MCF 10A (cell line): ENCODE measurements at regions of chr20 and their contacts with region 1.

Region 1: GRCh38 chr20:44609511-44610312 is 27.3 kb downstream of the PKIG start:
- DNase-seq: peak; percentile 92
- H3K4me3 Mint-ChIP-seq: peak overlapping the region; percentile 58
- H3K27ac Mint-ChIP-seq: peak overlapping the region; percentile 76
- H3K4me1 Mint-ChIP-seq: peaks cover 10% of the 10 kb centered on the region
- H3K27me3 Mint-ChIP-seq: no peaks in the 10 kb centered on the region
- CTCF ChIP-seq: peak; percentile 96

Region 2: DNA sequence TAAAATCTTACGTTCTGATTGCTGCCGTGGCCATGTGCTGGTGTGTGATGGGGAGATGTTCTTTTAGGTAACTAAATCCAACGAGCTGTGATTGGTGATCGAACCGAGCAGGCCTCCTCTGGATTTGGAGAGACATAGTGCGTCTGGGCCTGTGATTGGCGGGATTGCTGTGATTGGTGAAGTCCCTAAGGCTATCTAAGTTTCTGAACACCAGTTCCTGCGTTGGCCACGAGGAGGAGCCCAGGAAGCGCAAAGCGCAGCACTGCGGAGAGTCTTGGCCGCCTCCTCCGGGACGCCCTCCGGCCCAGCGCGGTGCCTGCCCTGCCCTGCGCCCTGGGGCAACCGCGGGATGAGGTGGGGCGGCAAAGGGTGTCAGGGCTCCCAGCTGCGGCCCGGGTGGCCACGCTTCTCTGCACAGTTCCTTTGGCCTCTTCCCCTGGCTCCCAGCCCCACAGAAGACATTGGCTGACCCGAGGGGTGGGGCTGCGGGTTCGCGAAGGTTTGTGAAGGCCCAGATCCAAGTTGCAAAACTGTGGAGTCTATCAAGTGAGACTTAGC is 221.2 kb before region 1 on chr20:
- CTCF ChIA-PET with region 1: interaction called, 23 read pairs
- POLR2A ChIA-PET with region 1: interaction called, 3 read pairs
- intact Hi-C with region 1: loop called (anchors 5 kb)
- DNase-seq: peak; percentile 81
- H3K4me3 Mint-ChIP-seq: peak overlapping the region; percentile 24
- H3K27ac Mint-ChIP-seq: peak overlapping the region; percentile 13
- H3K4me1 Mint-ChIP-seq: peaks cover 24% of the 10 kb centered on the region
- H3K27me3 Mint-ChIP-seq: no peaks in the 10 kb centered on the region
- CTCF ChIP-seq: peak; percentile 91

Region 3: GRCh38 chr20:44475694-44476560 is 133.8 kb before region 1 on chr20 and contains the start of gene TTPAL:
- CTCF ChIA-PET with region 1: interaction called, 45 read pairs
- POLR2A ChIA-PET with region 1: interaction called, 43 read pairs
- intact Hi-C with region 1: loop called (anchors 10 kb)
- DNase-seq: peak; percentile 89
- H3K4me3 Mint-ChIP-seq: peak within 1 kb of the TSS; percentile 98
- H3K27ac Mint-ChIP-seq: peak within 1 kb of the TSS; percentile 98
- H3K4me1 Mint-ChIP-seq: peaks cover 23% of the 10 kb centered on the region
- H3K27me3 Mint-ChIP-seq: no peaks in the 10 kb centered on the region
- CTCF ChIP-seq: no peak
- total RNA-seq, gene TTPAL: 34.1 and 35.4 TPM in 2 replicates

Region 4: GRCh38 chr20:44521484-44522481 is 87.9 kb before region 1 on chr20 and contains the start of gene SERINC3:
- CTCF ChIA-PET with region 1: interaction called, 80 read pairs
- POLR2A ChIA-PET with region 1: interaction called, 35 read pairs
- intact Hi-C with region 1: no loop called
- DNase-seq: peak; percentile 95
- H3K4me3 Mint-ChIP-seq: peak within 1 kb of the TSS; percentile 84
- H3K27ac Mint-ChIP-seq: peak within 1 kb of the TSS; percentile 95
- H3K4me1 Mint-ChIP-seq: peaks cover 35% of the 10 kb centered on the region
- H3K27me3 Mint-ChIP-seq: no peaks in the 10 kb centered on the region
- CTCF ChIP-seq: no peak
- total RNA-seq, gene SERINC3: 104 and 126 TPM in 2 replicates

Region 5: DNA sequence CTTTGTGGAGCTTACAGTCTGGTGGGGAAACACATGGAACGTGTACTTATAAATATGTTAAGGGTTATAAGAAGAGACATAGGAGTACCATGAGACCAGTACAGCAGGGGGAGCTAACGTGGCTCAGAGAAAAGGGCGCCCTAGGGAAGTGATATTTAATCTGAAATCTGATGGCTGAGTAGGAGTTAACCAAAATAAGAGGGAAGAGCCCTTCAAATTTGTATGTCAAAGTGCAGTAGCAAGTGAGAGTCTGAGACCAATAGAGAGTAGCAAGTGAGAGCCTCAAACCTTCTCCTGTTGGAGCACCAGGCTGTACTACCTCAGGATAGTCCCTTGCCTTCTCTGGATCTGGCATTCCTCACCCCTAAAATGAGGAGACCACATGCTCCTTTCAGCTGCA is 33.4 kb before region 1 on chr20:
- CTCF ChIA-PET with region 1: interaction called, 9 read pairs
- POLR2A ChIA-PET with region 1: interaction called, 23 read pairs
- intact Hi-C with region 1: no loop called
- DNase-seq: peak; percentile 53
- H3K4me3 Mint-ChIP-seq: no peak overlapping the region
- H3K27ac Mint-ChIP-seq: no peak overlapping the region
- H3K4me1 Mint-ChIP-seq: peaks cover 27% of the 10 kb centered on the region
- H3K27me3 Mint-ChIP-seq: no peaks in the 10 kb centered on the region
- CTCF ChIP-seq: no peak